Right ventricle myocardium superior (tissue), 1 donor: ENCODE measurements at regions of chrX and their contacts with region 1.

Region 1: GRCh38 chrX:3119376-3119775 is 78.1 kb downstream of the ARSF start:
- DNase-seq: no peak
- ATAC-seq: no peak

Region 2: GRCh38 chrX:3204606-3205005 is 85.2 kb after region 1 on chrX:
- intact Hi-C with region 1: no loop called
- DNase-seq: peak; percentile 44
- ATAC-seq: peak; percentile 38

Region 3: DNA sequence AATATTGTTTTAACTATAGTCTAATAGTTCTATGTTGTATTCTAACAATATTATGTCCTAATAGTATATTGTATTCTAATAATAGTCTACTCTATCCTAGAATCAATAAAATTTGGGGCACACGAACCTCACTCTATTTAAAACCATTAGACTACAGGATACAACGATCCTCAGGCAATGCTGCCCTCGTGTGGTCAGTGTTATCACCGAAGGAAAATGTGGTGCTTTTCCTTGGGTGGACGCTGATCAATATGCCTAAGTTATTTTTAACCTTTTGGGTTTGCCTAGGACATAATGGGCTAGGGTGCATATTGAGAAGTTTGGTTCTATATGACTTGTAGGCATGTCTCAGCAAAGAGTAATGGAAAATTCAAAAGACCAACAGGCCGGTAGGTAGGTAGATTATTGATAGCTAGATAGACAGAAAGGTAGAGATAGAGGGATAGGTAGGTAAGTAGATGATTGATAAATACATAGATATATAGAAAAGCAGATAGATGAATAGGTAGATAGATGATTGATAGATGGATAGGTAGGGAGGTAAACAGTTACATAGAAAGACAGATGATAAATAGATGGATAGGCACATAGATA is 519.0 kb after region 1 on chrX:
- intact Hi-C with region 1: loop called (anchors 10 kb)
- DNase-seq: no peak
- ATAC-seq: peak; percentile 34

Region 4: DNA sequence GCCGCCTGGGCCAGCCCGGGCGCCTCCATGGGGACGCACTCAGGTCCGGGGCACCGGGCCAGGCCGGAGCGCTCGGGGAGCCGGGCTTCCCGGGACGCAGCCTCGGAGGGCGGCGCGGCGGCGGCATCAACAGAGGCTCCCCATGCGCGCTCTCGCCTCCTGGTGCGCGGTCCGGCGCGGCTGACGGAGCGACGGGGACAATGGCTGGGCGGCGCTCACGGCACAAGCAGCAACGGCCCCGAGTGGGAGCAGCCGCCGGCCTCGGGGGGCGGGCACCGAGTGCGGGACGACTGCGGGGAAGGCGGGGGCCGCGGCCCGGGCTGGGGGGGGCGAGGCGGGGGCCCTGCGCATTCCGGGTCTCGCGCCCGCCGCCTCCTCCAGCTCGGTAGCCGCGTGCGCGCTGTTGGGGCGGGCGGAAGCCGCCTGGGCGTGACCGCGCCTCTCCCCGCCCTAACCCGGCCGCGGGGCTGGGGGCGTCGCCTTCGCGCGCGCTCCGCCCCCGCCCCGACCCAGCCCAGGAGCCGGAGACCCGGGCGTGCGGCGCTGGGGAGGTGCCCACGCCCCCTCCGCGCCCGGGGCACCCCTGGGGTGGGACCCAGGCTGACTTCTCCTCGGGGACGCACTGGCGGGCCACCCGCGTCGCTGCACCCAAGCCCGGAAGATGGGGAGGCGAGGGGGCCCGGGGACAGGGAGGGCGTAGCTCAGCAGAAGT is 594.0 kb after region 1 on chrX and contains the start of gene PRKX:
- intact Hi-C with region 1: no loop called
- DNase-seq: peak; percentile 66
- ATAC-seq: peak; percentile 89
- total RNA-seq, gene PRKX: 4.8 TPM